ENCODE measurements at regions of chr2 and their contacts with region 1.

Region 1: DNA sequence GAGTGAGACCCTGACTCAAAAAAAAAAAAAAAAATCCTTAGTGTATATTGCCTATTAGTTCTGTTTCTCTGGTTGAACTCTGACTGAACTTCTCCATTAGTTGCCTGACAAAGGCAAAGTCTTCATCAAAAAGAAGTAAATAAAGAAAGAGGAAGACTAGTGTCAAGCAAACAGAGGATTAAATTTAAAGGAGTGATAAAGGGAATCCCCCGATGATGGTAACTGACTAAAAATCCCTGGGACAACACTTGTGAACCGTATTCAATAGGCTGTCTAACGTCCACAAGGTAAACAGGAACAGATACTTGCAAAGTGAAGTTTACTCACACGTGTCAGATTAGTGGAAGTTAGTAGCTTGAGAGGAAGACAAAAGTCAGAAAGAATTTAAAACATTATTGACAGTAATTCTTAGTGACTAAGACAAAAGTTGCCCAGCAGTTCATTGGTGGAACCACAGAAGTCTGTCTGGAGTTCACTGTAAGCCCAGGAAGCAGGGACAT is 26.2 kb upstream of the SPOPL start:
- DNase-seq: no peak
- ATAC-seq: no peak
- H3K4me3 ChIP-seq: no peak overlapping the region
- H3K27ac ChIP-seq: no peak overlapping the region
- H3K4me1 ChIP-seq: peaks cover 6 to 19% of the 10 kb centered on the region in 2 experiments
- H3K27me3 ChIP-seq: no peaks in the 10 kb centered on the region
- CTCF ChIP-seq: no peak
- EP300 ChIP-seq: no peak
- POLR2A ChIP-seq: no peak
- RAD21 ChIP-seq: no peak

Region 2: GRCh38 chr2:138319616-138320015 is 155.7 kb before region 1 on chr2:
- CTCF ChIA-PET with region 1: no interaction called
- POLR2A ChIA-PET with region 1: no interaction called
- in situ Hi-C with region 1: no loop called
- intact Hi-C with region 1: no loop called
- DNase-seq: no peak
- ATAC-seq: no peak
- H3K4me3 ChIP-seq: no peak overlapping the region
- H3K27ac ChIP-seq: no peak overlapping the region
- H3K4me1 ChIP-seq: no peaks in the 10 kb centered on the region
- H3K27me3 ChIP-seq: no peaks in the 10 kb centered on the region
- CTCF ChIP-seq: no peak
- EP300 ChIP-seq: no peak
- POLR2A ChIP-seq: no peak
- RAD21 ChIP-seq: no peak

Region 3: DNA sequence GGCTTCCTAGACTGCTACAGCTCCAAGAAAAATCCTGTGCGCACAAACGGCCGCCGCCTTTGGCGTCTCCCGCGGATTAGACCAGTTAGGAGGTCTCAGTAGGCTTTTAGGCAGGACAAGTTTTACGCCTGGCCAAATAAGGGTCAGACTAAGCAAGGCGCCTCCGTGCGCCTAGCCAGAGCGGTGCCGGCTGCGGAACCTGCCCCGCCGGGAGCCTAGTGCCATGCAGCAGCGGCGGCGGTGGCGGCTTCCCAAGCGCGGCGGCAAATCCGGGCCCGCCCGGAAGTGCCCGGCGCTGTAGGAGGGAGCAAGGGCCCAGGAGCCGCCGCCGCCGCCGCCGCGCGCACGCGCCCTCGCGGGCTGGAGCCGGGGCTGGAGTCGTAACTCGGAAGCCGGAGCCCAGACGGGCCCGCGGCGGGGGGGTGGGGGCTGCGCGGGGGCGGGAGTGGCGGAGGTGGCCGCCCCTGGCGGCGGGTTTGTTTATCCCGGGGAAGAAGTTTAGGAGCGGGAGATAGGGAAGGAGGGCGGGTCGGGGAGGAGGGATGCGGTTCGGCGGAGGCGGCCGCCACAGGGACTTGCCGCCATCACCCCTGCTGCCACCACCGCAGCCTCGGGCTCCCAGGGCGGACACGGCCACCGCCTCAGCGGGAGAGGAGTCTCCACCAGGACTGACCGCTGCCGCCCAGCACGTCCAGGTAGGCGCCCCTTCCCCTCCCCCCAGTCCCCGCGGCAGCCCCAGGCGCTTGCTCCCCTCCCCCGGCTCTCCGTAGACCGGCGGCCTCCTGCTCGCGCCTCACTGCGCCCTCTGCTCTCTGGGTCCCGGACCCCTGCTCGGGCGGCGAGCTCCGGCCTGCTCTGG is 26.3 kb after region 1 on chr2 and contains the start of gene SPOPL:
- CTCF ChIA-PET with region 1: no interaction called
- POLR2A ChIA-PET with region 1: interaction called, 6 read pairs
- in situ Hi-C with region 1: no loop called
- intact Hi-C with region 1: loop called (anchors 2 kb)
- DNase-seq: peak; percentile 93 to 96 (median 96)
- ATAC-seq: peak; percentile 94
- H3K4me3 ChIP-seq: peak within 1 kb of the TSS; percentile 67
- H3K27ac ChIP-seq: peak within 1 kb of the TSS; percentile 92
- H3K4me1 ChIP-seq: peaks cover 12 to 34% of the 10 kb centered on the region in 2 experiments; a peak in 4 of 5 replicates
- H3K27me3 ChIP-seq: no peaks in the 10 kb centered on the region
- CTCF ChIP-seq: peak in 1 of 3 experiments; percentile 6; a peak in 1 of 6 replicates
- EP300 ChIP-seq: no peak
- POLR2A ChIP-seq: peak; percentile 91
- RAD21 ChIP-seq: no peak
- polyA plus RNA-seq, gene SPOPL: 0.53 to 0.95 TPM

Region 4: DNA sequence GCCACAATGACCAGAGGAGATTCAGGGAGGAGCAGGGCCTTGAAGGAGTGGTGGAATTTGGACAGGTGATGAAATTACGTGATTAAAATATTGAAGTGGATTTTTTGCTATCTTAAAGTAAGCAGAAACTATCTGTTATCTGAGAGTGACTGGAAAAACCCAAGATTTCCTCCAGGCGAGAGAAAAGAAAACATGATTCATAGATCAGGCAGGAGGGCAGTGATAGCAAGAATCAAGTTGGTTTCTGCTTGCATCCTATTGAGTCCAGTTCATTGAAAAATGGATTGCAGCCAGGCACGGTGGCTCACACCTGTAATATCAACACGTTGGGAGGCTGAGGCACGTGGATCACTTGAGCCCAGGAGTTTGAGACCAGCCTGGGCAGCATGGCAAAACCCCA is 177.1 kb after region 1 on chr2:
- CTCF ChIA-PET with region 1: no interaction called
- POLR2A ChIA-PET with region 1: no interaction called
- in situ Hi-C with region 1: no loop called
- intact Hi-C with region 1: loop called (anchors 10 kb)
- DNase-seq: no peak
- ATAC-seq: no peak
- H3K4me3 ChIP-seq: no peak overlapping the region
- H3K27ac ChIP-seq: no peak overlapping the region
- H3K4me1 ChIP-seq: no peaks in the 10 kb centered on the region
- H3K27me3 ChIP-seq: no peaks in the 10 kb centered on the region
- CTCF ChIP-seq: no peak
- EP300 ChIP-seq: no peak
- POLR2A ChIP-seq: no peak
- RAD21 ChIP-seq: no peak

Region 5: GRCh38 chr2:138712212-138712979 is 237.1 kb after region 1 on chr2:
- CTCF ChIA-PET with region 1: no interaction called
- POLR2A ChIA-PET with region 1: no interaction called
- in situ Hi-C with region 1: no loop called
- intact Hi-C with region 1: loop called (anchors 10 kb)
- DNase-seq: no peak
- ATAC-seq: no peak
- H3K4me3 ChIP-seq: no peak overlapping the region
- H3K27ac ChIP-seq: no peak overlapping the region
- H3K4me1 ChIP-seq: no peaks in the 10 kb centered on the region
- H3K27me3 ChIP-seq: no peaks in the 10 kb centered on the region
- CTCF ChIP-seq: no peak
- EP300 ChIP-seq: no peak
- POLR2A ChIP-seq: no peak
- RAD21 ChIP-seq: no peak

Region 6: GRCh38 chr2:138787053-138787666 is 311.8 kb after region 1 on chr2:
- CTCF ChIA-PET with region 1: no interaction called
- POLR2A ChIA-PET with region 1: no interaction called
- in situ Hi-C with region 1: no loop called
- intact Hi-C with region 1: loop called (anchors 10 kb)
- DNase-seq: peak in 2 of 4 experiments; percentile 7 to 18
- ATAC-seq: no peak
- H3K4me3 ChIP-seq: no peak overlapping the region
- H3K27ac ChIP-seq: no peak overlapping the region
- H3K4me1 ChIP-seq: no peaks in the 10 kb centered on the region
- H3K27me3 ChIP-seq: peaks cover 0 to 2% of the 10 kb centered on the region in 2 experiments; a peak in 1 of 5 replicates
- CTCF ChIP-seq: peak; percentile 17 to 61 (median 48); a peak in 5 of 6 replicates
- EP300 ChIP-seq: no peak
- POLR2A ChIP-seq: no peak
- RAD21 ChIP-seq: peak; percentile 49 to 73

Measured in K562 (cell line).